Activated CD4-positive, alpha-beta T cell treated with anti-CD3 and anti-CD28 coated beads, Interleukin-2, amount 10 ng/mL, durations not matched to agents 7 days and 5 days (primary cell): ENCODE measurements at regions of chr7 and their contacts with region 1.

Region 1: GRCh38 chr7:24979863-24980533 is at the start of gene OSBPL3:
- DNase-seq: peak; percentile 94
- H3K4me3 Mint-ChIP-seq: peak within 1 kb of the TSS; percentile 92
- H3K27ac Mint-ChIP-seq: peak within 1 kb of the TSS; percentile 93
- H3K4me1 Mint-ChIP-seq: peaks cover 62% of the 10 kb centered on the region
- H3K27me3 Mint-ChIP-seq: peaks cover 8% of the 10 kb centered on the region
- total RNA-seq, gene OSBPL3: 77.5 to 77.9 TPM

Region 2: DNA sequence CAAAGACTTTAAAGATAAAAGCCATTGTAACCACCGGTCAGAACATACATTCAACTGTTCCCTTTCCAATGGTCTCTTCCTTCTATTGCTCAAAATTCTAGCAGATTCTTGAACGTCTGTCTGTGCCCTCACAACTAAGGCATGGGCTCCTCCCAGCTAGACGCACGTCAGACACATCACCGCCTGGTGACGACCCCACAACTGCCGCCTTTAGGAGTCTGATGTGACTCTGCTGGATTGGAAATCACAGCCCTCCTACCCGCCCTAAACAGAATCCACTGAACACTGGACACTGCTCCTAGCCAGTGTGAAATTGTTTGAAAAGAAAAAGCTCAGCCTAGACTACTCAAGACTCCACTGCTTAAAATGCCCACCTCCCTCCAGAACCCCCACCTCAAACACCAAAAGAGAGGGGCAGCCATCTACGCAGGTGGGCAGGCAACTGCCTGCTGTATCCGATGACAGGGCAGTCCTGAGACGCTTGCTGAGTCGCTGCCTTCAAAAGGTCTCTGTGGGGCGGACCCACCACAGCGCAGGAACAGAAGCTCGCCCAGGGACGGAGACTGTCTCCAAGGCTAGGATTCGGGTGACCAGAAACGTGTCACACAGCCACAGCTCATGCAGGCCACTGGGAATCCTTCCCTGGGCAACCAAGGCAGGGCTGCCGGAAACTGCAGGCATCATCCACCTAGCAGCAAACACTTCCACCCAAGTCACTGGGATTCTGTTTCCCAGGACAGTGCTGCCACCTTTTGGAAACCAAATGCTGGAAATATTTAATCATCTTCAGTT is 257.4 kb before region 1 on chr7:
- CTCF ChIA-PET with region 1: no interaction called
- POLR2A ChIA-PET with region 1: no interaction called
- DNase-seq: no peak
- H3K4me3 Mint-ChIP-seq: no peak overlapping the region
- H3K27ac Mint-ChIP-seq: no peak overlapping the region
- H3K4me1 Mint-ChIP-seq: peaks cover 21% of the 10 kb centered on the region
- H3K27me3 Mint-ChIP-seq: peaks cover 4% of the 10 kb centered on the region

Region 3: DNA sequence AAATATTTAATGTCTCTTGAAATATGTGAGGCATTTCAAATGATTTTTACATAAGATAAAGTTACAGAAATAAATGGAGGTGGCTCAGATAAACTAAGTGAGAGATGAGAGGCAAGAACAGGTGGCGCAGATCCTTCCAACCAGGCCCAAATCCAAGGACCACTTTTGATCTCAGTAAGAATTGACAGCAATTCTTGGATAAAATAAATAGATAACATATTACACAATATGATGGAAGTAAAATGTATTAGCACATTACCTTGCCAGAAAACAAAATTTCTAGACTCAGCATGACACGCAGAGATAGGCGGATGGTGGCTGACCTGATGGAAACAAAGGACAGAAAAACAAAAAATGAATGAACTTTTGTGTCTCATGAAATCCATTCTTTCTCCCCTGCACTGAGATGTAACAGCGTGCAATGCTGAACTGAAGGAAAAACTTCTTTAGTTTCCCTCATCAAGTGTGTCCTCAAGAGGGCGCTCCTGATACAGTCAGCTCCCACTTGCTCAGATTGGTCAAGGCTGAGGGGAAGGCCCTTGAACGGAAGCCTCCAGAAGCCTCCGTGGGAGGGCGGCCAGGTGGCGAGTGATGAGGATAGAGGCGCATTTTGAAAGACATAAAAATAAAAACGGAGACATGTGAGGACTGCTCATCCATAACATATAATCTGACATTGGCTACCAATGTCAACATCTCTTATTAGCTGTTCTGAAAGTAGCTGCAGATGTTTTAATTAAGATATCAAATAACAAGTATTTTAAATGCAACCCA is 159.9 kb before region 1 on chr7:
- CTCF ChIA-PET with region 1: interaction called, 28 read pairs
- POLR2A ChIA-PET with region 1: interaction called, 9 read pairs
- DNase-seq: peak; percentile 86
- H3K4me3 Mint-ChIP-seq: peak overlapping the region; percentile 74
- H3K27ac Mint-ChIP-seq: peak overlapping the region; percentile 97
- H3K4me1 Mint-ChIP-seq: peaks cover 56% of the 10 kb centered on the region
- H3K27me3 Mint-ChIP-seq: no peaks in the 10 kb centered on the region

Region 4: GRCh38 chr7:24869572-24869971 is 110.4 kb before region 1 on chr7:
- CTCF ChIA-PET with region 1: no interaction called
- POLR2A ChIA-PET with region 1: no interaction called
- DNase-seq: no peak
- H3K4me3 Mint-ChIP-seq: no peak overlapping the region
- H3K27ac Mint-ChIP-seq: no peak overlapping the region
- H3K4me1 Mint-ChIP-seq: peaks cover 31% of the 10 kb centered on the region
- H3K27me3 Mint-ChIP-seq: no peaks in the 10 kb centered on the region

Region 5: GRCh38 chr7:24911213-24911603 is 68.8 kb before region 1 on chr7:
- CTCF ChIA-PET with region 1: interaction called, 10 read pairs
- POLR2A ChIA-PET with region 1: interaction called, 9 read pairs
- DNase-seq: peak; percentile 55
- H3K4me3 Mint-ChIP-seq: peak overlapping the region; percentile 68
- H3K27ac Mint-ChIP-seq: peak overlapping the region; percentile 91
- H3K4me1 Mint-ChIP-seq: peaks cover 62% of the 10 kb centered on the region
- H3K27me3 Mint-ChIP-seq: no peaks in the 10 kb centered on the region

Region 6: GRCh38 chr7:24965831-24966709 is 13.9 kb before region 1 on chr7:
- CTCF ChIA-PET with region 1: interaction called, 27 read pairs
- POLR2A ChIA-PET with region 1: no interaction called
- DNase-seq: peak; percentile 40
- H3K4me3 Mint-ChIP-seq: peak overlapping the region; percentile 15
- H3K27ac Mint-ChIP-seq: peak overlapping the region; percentile 70
- H3K4me1 Mint-ChIP-seq: peaks cover 68% of the 10 kb centered on the region
- H3K27me3 Mint-ChIP-seq: no peaks in the 10 kb centered on the region

Region 7: DNA sequence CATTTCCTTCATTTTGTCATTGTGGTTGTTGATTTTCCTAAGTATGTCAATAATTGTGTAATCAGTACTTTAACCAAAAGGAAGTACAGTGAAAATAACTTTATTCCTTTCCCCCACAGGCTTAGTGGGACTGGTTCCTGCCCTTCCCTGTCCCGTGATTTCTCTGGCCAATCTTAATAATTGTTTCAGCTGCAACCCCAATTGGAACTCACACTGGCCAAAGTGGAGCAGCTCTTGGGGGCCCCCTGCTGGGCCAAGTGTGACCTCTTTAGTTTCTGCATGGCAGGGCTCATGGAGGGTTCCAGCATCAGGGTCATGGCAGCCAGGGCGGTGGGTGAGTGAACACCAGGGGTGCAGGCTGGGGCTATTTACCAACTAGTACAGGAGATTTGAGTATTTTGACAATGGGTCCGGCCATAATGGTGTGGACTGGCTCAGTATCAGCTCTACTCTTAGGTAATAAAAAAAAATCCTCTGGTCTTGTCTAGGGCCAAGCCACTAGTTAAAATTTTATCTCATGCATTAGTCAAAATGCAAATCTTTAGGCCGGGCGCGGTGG is 113.3 kb after region 1 on chr7:
- CTCF ChIA-PET with region 1: interaction called, 13 read pairs
- POLR2A ChIA-PET with region 1: no interaction called
- DNase-seq: peak; percentile 82
- H3K4me3 Mint-ChIP-seq: no peak overlapping the region
- H3K27ac Mint-ChIP-seq: no peak overlapping the region
- H3K4me1 Mint-ChIP-seq: peaks cover 12% of the 10 kb centered on the region
- H3K27me3 Mint-ChIP-seq: peaks cover 9% of the 10 kb centered on the region